ENCODE measurements at regions of chr2 and their contacts with region 1.

Region 1: DNA sequence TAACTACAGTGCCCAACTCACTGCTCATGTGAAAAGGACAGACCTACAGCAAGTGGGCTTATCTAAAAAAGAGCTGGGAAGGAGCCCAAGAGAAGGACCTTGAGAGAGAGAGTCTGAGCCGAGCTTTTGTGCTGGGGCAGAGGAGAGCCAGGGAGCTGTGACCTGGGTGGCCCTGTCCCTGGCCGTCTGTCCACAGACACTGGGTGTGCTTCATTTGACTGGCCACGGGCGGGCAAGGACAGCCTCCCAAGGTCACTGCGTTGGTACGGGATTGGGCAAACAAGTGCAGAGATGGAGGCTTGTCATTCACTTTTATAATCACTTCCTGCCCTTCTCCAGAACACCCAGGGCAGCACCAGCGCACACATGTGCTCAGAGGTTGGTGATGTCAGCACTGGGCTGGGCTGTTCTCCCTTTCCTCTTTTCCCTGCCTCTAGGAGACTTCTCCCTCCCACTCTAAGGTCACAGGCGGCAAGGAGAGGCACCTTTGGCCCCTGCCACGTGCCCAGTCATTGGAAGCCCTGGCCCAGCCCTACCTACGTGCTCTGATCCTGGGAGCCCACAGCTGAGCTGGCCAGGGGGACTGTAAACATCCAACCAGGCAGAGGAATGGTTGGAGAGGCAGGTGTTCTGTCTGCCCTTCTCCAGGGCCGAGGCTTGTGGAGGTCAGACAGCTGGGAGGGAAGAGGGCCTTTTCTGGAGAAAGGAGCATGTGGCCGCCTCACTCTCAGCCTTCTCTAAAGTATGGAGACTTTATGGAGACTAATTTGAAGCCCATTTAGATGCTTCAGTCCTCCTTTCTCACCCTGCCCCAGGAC is 6.4 kb upstream of the PSD4 start:
- DNase-seq: peak; percentile 71
- H3K4me3 Mint-ChIP-seq: peak overlapping the region; percentile 61
- H3K27ac Mint-ChIP-seq: peak overlapping the region; percentile 94
- H3K4me1 Mint-ChIP-seq: peaks cover 63% of the 10 kb centered on the region
- H3K27me3 Mint-ChIP-seq: no peaks in the 10 kb centered on the region

Region 2: DNA sequence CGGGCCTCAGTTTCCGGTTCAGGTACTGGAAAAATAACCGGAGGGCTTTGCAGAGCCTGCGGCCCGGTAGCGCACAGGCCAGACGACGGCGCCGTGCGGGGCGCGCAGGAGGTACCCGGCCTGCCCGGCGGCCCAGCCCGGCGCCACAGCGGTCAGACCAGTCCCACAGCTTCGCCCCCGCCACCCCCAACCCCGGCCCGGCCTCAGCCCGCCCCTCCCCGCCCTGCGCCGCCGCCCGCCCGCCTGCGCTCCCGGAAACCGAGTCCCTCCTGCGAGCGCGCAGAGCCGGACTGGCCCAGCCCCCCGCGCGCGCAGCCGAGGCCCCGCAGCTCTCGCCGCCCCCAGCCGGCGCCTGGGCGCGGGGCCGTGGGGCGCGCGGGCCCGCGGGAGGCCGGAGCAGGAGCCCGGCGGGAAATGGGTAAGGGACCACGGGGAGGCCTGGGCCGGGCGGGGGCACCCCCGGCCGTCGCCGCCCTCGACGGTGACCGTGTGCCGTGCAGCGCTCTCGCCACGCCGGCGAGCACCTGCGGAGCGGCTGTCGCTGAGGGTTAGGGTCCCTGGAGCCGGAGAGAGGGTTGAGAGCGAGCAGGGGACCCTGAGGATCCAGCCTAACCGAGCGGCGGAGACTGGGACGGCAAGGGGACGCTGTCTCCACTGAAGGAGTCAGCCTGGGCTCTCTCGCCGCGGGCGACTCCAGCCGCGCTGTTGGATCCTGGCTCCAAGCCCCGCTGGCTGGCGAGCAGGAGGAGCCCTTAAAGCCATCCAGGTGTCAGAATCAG is 10.0 kb before region 1 on chr2:
- CTCF ChIA-PET with region 1: interaction called, 3 read pairs
- POLR2A ChIA-PET with region 1: interaction called, 74 read pairs
- intact Hi-C with region 1: loop called (anchors 1 kb)
- DNase-seq: peak; percentile 66
- H3K4me3 Mint-ChIP-seq: peak overlapping the region; percentile 81
- H3K27ac Mint-ChIP-seq: peak overlapping the region; percentile 79
- H3K4me1 Mint-ChIP-seq: peaks cover 22% of the 10 kb centered on the region
- H3K27me3 Mint-ChIP-seq: no peaks in the 10 kb centered on the region

Region 3: DNA sequence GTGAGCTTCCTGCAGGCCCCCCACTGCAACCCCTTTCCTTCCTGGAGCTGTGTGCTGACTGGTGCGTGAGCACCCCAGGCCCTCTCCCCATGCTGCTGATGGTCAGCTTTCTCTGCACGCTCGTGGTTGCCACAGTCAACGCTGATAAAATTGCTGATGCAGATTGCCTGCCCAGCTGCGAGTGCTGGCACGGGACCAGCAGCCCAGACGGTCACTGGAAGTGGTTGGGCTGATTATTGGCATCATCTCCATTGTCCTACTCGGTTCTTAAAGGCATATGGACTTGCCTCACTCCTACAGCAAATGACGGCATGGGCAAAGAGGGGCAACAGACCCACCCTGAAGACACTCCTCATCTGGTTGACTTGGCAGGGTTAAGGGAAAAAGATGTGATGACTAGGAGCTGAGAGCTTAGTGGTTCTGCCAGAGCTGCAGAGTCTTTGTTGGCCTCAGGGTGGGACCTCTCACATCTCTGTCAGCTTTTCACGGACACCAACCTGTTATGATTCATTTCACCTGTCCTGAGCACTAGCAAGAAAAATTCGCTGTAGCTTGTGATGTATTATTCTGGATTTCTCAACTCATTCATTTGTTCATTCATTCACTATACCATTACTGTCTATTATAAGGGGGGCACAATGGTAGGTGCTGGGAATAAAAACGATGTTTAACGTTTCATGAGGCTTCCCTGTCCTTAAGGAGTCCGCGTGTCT is 73.0 kb after region 1 on chr2:
- CTCF ChIA-PET with region 1: no interaction called
- POLR2A ChIA-PET with region 1: no interaction called
- intact Hi-C with region 1: no loop called
- DNase-seq: no peak
- H3K4me3 Mint-ChIP-seq: no peak overlapping the region
- H3K27ac Mint-ChIP-seq: peak overlapping the region; percentile 88
- H3K4me1 Mint-ChIP-seq: peaks cover 43% of the 10 kb centered on the region
- H3K27me3 Mint-ChIP-seq: no peaks in the 10 kb centered on the region

Measured in activated CD4-positive, alpha-beta memory T cell treated with anti-CD3 and anti-CD28 coated beads for 36 hours (primary cell).